ENCODE measurements at regions of chr9 and their contacts with region 1.

Region 1: DNA sequence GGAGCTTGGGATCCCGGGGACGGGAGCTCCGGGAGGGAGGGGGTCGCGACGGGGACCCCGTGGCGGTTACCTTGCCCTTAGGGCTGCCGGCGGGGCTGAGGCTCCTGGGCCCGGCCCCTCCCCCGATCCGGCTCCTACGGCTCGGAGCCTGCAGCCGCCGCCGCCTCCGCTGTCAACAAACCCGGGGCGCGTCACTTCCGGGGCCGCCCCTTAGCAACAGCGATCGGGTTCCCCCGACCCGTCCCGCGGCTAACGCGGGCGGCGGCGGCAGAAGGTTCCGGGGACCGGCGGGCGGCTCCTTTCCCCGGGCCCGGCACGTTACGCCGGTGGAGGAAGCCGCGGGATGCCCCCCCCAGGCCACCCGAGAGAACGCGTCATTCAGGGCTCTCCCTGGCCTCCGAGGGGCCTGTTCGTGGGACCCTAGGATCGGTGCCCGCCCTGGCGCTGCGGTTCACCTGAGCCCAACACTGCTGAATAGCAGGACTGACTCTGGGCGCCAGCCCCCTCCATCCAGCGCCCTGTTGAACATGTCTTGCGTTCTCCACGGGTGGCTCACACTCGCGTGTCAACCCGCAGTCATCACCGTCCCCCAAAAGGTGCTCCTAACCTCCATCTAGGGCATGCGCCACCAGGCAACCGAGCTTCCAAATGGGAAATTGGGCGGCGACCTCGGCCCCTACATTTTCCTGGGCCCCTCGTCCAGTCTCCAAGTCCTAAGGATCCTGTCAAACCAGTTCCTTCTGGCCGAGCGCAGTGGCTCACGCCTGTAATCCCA is at the start of gene ZER1:
- DNase-seq: peak; percentile 93 to 95 (median 94)
- H3K4me3 ChIP-seq: peak within 1 kb of the TSS; percentile 73 to 98
- H3K4me3 Mint-ChIP-seq: peak within 1 kb of the TSS; percentile 96 to 99 (median 98)
- H3K27ac ChIP-seq: peak within 1 kb of the TSS; percentile 96
- H3K27ac Mint-ChIP-seq: peak within 1 kb of the TSS; percentile 92 to 99 (median 99)
- H3K4me1 ChIP-seq: peaks cover 32% of the 10 kb centered on the region
- H3K4me1 Mint-ChIP-seq: peaks cover 19 to 38% (median 26%) of the 10 kb centered on the region in 4 donors
- H3K27me3 ChIP-seq: no peaks in the 10 kb centered on the region
- H3K27me3 Mint-ChIP-seq: no peaks in the 10 kb centered on the region
- total RNA-seq, gene ZER1: 37.9 to 44.2 TPM

Region 2: GRCh38 chr9:128370826-128371621 is 400.9 kb before region 1 on chr9 and contains the start of gene URM1:
- CTCF ChIA-PET with region 1: no interaction called
- POLR2A ChIA-PET with region 1: interaction called, 5 read pairs
- intact Hi-C with region 1: loop called (anchors 10 kb)
- DNase-seq: peak; percentile 95 to 98 (median 96)
- H3K4me3 ChIP-seq: peak within 1 kb of the TSS; percentile 88 to 95
- H3K4me3 Mint-ChIP-seq: peak within 1 kb of the TSS; percentile 95 to 98 (median 96)
- H3K27ac ChIP-seq: peak within 1 kb of the TSS; percentile 91
- H3K27ac Mint-ChIP-seq: peak within 1 kb of the TSS; percentile 97 to 99 (median 98)
- H3K4me1 ChIP-seq: peaks cover 20% of the 10 kb centered on the region
- H3K4me1 Mint-ChIP-seq: peaks cover 22 to 37% (median 29%) of the 10 kb centered on the region in 4 donors
- H3K27me3 ChIP-seq: no peaks in the 10 kb centered on the region
- H3K27me3 Mint-ChIP-seq: peaks cover 2 to 4% of the 10 kb centered on the region in 2 donors
- total RNA-seq, gene URM1: 44.1 to 45.5 TPM

Region 3: GRCh38 chr9:128656416-128657343 is 115.3 kb before region 1 on chr9 and contains the start of gene DYNC2I2:
- CTCF ChIA-PET with region 1: no interaction called
- POLR2A ChIA-PET with region 1: interaction called, 4 read pairs
- intact Hi-C with region 1: loop called (anchors 1 kb)
- DNase-seq: peak; percentile 95 to 96 (median 96)
- H3K4me3 ChIP-seq: peak within 1 kb of the TSS; percentile 95 to 98
- H3K4me3 Mint-ChIP-seq: peak within 1 kb of the TSS; percentile 91 to 98 (median 94)
- H3K27ac ChIP-seq: peak within 1 kb of the TSS; percentile 95
- H3K27ac Mint-ChIP-seq: peak within 1 kb of the TSS; percentile 95 to 100 (median 99)
- H3K4me1 ChIP-seq: peaks cover 8% of the 10 kb centered on the region
- H3K4me1 Mint-ChIP-seq: peaks cover 2 to 15% (median 6%) of the 10 kb centered on the region in 4 donors
- H3K27me3 ChIP-seq: no peaks in the 10 kb centered on the region
- H3K27me3 Mint-ChIP-seq: no peaks in the 10 kb centered on the region
- total RNA-seq, gene DYNC2I2: 4.3 to 4.6 TPM

Region 4: DNA sequence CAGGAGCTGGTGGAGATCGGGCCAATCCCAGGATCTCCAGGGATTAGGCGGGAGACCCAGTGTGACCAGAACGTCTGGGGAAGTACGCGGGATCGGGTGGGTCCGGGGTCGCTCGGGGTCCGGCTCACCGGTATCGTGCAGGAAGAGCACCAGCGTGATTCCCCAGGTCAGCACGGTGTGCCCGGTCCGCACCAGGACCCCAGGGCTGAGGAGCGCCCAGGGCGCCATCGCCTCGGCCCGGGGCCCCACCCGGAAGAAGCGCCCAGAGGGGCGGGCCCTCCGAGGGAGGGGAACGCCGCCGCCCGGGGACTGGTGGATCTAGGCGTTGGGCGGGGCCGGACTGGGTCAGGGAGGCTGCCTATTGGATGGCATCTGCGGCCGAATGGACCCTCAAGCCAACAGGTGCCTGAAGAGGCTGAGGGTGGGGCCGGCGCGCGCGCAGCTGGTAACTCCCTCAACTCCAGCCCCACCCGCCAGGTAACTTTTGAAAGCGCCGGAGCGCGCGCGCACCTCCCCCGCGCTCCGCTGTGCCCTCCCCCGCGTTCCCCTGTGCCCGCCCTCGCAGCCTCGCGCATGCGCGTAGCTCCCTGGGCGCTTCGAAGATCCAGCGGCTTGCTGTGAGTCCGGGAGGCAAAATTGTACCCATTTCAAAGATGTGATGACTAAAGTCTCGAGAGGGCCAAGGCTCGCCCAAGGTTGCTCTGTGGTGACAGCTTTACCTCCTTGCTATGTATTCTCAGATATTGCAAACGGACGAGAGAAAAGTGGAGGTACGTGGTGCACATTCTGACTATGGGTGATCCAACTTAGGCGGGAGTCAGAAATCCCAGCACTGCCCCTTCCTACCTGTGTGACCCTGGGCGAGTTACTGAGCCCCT is 47.8 kb before region 1 on chr9 and contains the start of gene ZDHHC12:
- CTCF ChIA-PET with region 1: no interaction called
- POLR2A ChIA-PET with region 1: interaction called, 27 read pairs
- intact Hi-C with region 1: loop called (anchors 1 kb)
- DNase-seq: peak; percentile 98 to 99 (median 99)
- H3K4me3 ChIP-seq: peak within 1 kb of the TSS; percentile 89 to 95
- H3K4me3 Mint-ChIP-seq: peak within 1 kb of the TSS; percentile 90 to 94 (median 92)
- H3K27ac ChIP-seq: peak within 1 kb of the TSS; percentile 70
- H3K27ac Mint-ChIP-seq: peak within 1 kb of the TSS; percentile 89 to 97 (median 95)
- H3K4me1 ChIP-seq: peaks cover 28% of the 10 kb centered on the region
- H3K4me1 Mint-ChIP-seq: peaks cover 23 to 45% (median 32%) of the 10 kb centered on the region in 4 donors
- H3K27me3 ChIP-seq: no peaks in the 10 kb centered on the region
- H3K27me3 Mint-ChIP-seq: no peaks in the 10 kb centered on the region
- total RNA-seq, gene ZDHHC12: 24.6 to 25.7 TPM

Region 5: DNA sequence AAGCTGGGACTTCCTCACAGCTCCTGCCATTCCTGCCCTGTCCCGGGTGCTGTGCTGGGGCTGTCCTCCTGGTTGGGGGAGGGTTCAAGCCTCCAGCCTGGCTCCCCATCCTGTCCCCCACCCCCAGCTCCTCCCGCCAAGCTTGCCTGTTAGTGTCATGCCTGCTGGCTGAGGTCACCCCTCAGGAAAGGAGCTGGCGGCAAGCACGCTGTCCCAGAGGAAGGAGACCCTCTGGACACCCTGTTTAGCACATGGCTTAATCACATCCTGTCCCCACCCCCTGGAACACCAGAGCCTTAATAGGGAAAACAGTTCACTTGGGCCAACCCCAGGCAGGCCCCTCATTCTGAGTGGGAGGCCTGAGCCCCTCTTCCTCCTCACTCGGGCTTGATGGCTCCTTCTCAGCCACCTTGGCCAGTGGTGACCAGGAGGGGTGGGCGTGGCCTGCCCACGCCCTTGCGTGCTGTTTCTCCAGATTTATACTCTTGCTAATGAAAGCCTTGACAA is 139.7 kb after region 1 on chr9:
- CTCF ChIA-PET with region 1: no interaction called
- POLR2A ChIA-PET with region 1: no interaction called
- intact Hi-C with region 1: no loop called
- DNase-seq: no peak
- H3K4me3 ChIP-seq: no peak overlapping the region
- H3K4me3 Mint-ChIP-seq: no peak overlapping the region
- H3K27ac ChIP-seq: no peak overlapping the region
- H3K27ac Mint-ChIP-seq: peak overlapping the region in 5 of 7 donors; percentile 15 to 81 (median 64)
- H3K4me1 ChIP-seq: peaks cover 57% of the 10 kb centered on the region
- H3K4me1 Mint-ChIP-seq: peaks cover 19 to 71% (median 39%) of the 10 kb centered on the region in 4 donors
- H3K27me3 ChIP-seq: no peaks in the 10 kb centered on the region
- H3K27me3 Mint-ChIP-seq: no peaks in the 10 kb centered on the region

Region 6: DNA sequence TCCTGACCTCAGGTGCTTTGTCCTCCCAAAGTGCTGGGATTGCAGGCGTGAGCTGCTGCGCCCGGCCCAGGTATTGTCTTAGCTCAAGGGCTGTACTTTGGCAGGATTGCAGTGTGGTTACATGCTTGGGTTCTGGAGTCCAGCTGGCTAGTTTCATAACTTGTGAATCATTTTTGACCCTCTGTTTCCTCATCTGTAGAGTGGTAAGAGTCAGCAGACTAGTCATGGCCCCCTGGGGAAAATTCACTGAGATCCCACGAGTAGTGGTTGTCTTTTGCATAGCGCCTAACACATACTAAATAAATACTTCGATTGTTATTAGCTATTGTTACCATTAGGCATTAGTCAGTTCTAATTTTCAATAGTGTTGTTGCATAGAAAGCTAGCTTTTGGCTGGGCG is 353.5 kb after region 1 on chr9:
- CTCF ChIA-PET with region 1: no interaction called
- POLR2A ChIA-PET with region 1: no interaction called
- intact Hi-C with region 1: no loop called
- DNase-seq: no peak
- H3K4me3 ChIP-seq: no peak overlapping the region
- H3K4me3 Mint-ChIP-seq: no peak overlapping the region
- H3K27ac ChIP-seq: no peak overlapping the region
- H3K27ac Mint-ChIP-seq: no peak overlapping the region
- H3K4me1 ChIP-seq: no peaks in the 10 kb centered on the region
- H3K4me1 Mint-ChIP-seq: peaks cover 0 to 7% (median 0%) of the 10 kb centered on the region in 4 donors
- H3K27me3 ChIP-seq: no peaks in the 10 kb centered on the region
- H3K27me3 Mint-ChIP-seq: no peaks in the 10 kb centered on the region

Measured in CD4-positive, alpha-beta memory T cell (primary cell).